OCI-LY7 (cell line): ENCODE measurements at regions of chr3 and their contacts with region 1.

Region 1: GRCh38 chr3:152444029-152444641 is 175.4 kb downstream of the MBNL1 start:
- DNase-seq: peak; percentile 71
- H3K4me3 ChIP-seq: no peak overlapping the region
- H3K27ac ChIP-seq: peak overlapping the region; percentile 3
- H3K4me1 ChIP-seq: peaks cover 19% of the 10 kb centered on the region
- CTCF ChIP-seq: peak; percentile 97

Region 2: GRCh38 chr3:150761831-150762674 is 1682.1 kb before region 1 on chr3:
- CTCF ChIA-PET with region 1: no interaction called
- POLR2A ChIA-PET with region 1: no interaction called
- intact Hi-C with region 1: no loop called
- DNase-seq: peak; percentile 34
- H3K4me3 ChIP-seq: peak overlapping the region; percentile 78
- H3K27ac ChIP-seq: no peak overlapping the region
- H3K4me1 ChIP-seq: peaks cover 65% of the 10 kb centered on the region
- CTCF ChIP-seq: no peak

Region 3: GRCh38 chr3:152071924-152072323 is 372.2 kb before region 1 on chr3:
- CTCF ChIA-PET with region 1: no interaction called
- POLR2A ChIA-PET with region 1: interaction called, 3 read pairs
- intact Hi-C with region 1: loop called (anchors 2 kb)
- DNase-seq: peak; percentile 38
- H3K4me3 ChIP-seq: no peak overlapping the region
- H3K27ac ChIP-seq: no peak overlapping the region
- H3K4me1 ChIP-seq: no peaks in the 10 kb centered on the region
- CTCF ChIP-seq: peak; percentile 80

Region 4: GRCh38 chr3:152183473-152183872 is 260.7 kb before region 1 on chr3:
- CTCF ChIA-PET with region 1: interaction called, 4 read pairs
- POLR2A ChIA-PET with region 1: interaction called, 20 read pairs
- intact Hi-C with region 1: loop called (anchors 1 kb)
- DNase-seq: peak; percentile 79
- H3K4me3 ChIP-seq: no peak overlapping the region
- H3K27ac ChIP-seq: no peak overlapping the region
- H3K4me1 ChIP-seq: peaks cover 3% of the 10 kb centered on the region
- CTCF ChIP-seq: peak; percentile 98

Region 5: DNA sequence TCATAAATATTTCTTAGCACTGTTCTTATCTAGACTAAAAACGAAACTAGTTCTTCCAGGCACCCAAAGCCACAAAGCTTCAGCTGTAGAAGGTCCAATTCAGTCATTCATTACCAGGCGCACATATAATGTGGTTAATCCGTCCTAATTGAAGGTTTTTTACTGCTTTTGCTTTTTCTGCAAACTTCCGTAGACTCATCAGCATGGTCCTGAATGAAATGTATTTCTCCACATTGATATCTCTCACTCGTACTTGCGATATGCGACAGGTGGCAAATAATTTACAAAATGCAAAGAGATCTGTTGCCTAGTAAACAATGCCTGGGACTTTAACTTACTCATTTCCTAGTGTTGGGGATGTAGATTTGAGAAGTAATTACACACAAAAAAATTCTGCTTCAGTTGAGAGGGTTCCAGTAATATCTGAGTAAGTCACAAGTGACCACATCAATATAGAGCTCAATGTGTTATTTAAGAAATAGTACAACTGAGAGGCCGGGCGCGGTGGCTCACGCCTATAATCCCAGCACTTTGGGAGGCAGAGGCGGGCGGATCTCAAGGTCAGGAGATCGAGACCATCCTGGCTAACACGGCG is 250.4 kb before region 1 on chr3:
- CTCF ChIA-PET with region 1: no interaction called
- POLR2A ChIA-PET with region 1: interaction called, 14 read pairs
- intact Hi-C with region 1: no loop called
- DNase-seq: peak; percentile 32
- H3K4me3 ChIP-seq: peak overlapping the region; percentile 64
- H3K27ac ChIP-seq: no peak overlapping the region
- H3K4me1 ChIP-seq: peaks cover 42% of the 10 kb centered on the region
- CTCF ChIP-seq: no peak

Region 6: DNA sequence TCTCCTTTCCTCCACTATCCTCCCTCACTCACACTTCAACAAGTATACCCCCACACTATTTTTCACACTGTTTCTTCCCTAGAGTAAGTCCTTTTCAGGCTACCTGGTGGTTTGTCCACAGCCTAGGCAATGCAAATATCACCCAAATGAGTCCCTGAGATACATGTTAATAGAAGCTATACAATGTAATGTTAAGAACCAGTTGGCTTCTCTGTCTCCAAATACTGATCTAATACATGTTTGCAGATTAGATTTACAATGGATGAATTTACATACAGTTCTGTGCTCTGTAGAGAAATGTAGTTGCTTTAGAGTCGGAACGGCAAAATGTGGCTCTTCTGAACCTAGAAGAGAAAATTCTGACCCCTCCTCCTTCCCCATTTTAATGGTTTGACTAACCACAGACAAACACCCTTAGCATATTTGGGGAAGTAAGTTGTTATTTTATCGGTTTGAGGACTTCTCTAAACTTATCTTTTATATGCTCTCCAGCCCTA is 239.0 kb before region 1 on chr3:
- CTCF ChIA-PET with region 1: no interaction called
- POLR2A ChIA-PET with region 1: interaction called, 10 read pairs
- intact Hi-C with region 1: no loop called
- DNase-seq: peak; percentile 48
- H3K4me3 ChIP-seq: peak overlapping the region; percentile 60
- H3K27ac ChIP-seq: peak overlapping the region; percentile 23
- H3K4me1 ChIP-seq: peaks cover 53% of the 10 kb centered on the region
- CTCF ChIP-seq: no peak

Region 7: DNA sequence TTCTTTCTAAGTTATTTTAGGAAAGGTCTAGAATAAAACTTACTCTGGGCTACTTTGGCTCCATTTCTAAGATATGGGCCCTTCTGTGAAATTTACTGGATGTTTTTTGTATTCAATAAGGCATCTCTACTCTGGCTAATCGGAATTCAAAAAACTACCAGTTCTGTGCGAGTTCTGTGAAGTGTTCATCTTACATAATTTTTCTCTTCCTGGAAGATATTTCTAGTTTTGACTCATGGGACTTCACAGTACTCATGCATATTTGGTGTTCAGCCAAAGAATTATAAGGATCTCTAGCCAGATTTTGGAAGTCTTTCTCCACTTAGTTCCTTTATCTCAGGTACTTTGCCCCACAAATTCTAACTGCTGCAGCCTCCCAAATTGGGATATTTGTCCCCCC is 221.8 kb before region 1 on chr3:
- CTCF ChIA-PET with region 1: no interaction called
- POLR2A ChIA-PET with region 1: no interaction called
- intact Hi-C with region 1: no loop called
- DNase-seq: no peak
- H3K4me3 ChIP-seq: no peak overlapping the region
- H3K27ac ChIP-seq: no peak overlapping the region
- H3K4me1 ChIP-seq: peaks cover 12% of the 10 kb centered on the region
- CTCF ChIP-seq: no peak

Region 8: GRCh38 chr3:152307829-152308474 is 136.2 kb before region 1 on chr3:
- CTCF ChIA-PET with region 1: no interaction called
- POLR2A ChIA-PET with region 1: no interaction called
- intact Hi-C with region 1: no loop called
- DNase-seq: no peak
- H3K4me3 ChIP-seq: no peak overlapping the region
- H3K27ac ChIP-seq: no peak overlapping the region
- H3K4me1 ChIP-seq: no peaks in the 10 kb centered on the region
- CTCF ChIP-seq: no peak

Region 9: GRCh38 chr3:153768561-153769469 is 1324.7 kb after region 1 on chr3:
- CTCF ChIA-PET with region 1: no interaction called
- POLR2A ChIA-PET with region 1: no interaction called
- intact Hi-C with region 1: no loop called
- DNase-seq: peak; percentile 84
- H3K4me3 ChIP-seq: no peak overlapping the region
- H3K27ac ChIP-seq: no peak overlapping the region
- H3K4me1 ChIP-seq: peaks cover 30% of the 10 kb centered on the region
- CTCF ChIP-seq: peak; percentile 95